CD8-positive, alpha-beta T cell (primary cell): ENCODE measurements at regions of chr2 and their contacts with region 1.

Region 1: GRCh38 chr2:70948337-70949003 is 12.8 kb downstream of the ATP6V1B1 start:
- DNase-seq: peak; percentile 55 to 86 (median 79)
- ATAC-seq: peak; percentile 97
- H3K4me3 ChIP-seq: peak overlapping the region; percentile 3 to 29
- H3K4me3 Mint-ChIP-seq: peak overlapping the region; percentile 77
- H3K27ac ChIP-seq: no peak overlapping the region
- H3K27ac Mint-ChIP-seq: no peak overlapping the region
- H3K4me1 ChIP-seq: no peaks in the 10 kb centered on the region
- H3K4me1 Mint-ChIP-seq: peaks cover 13% of the 10 kb centered on the region
- H3K27me3 ChIP-seq: peaks cover 0 to under 1% of the 10 kb centered on the region in 2 experiments
- H3K27me3 Mint-ChIP-seq: peaks cover 17% of the 10 kb centered on the region
- CTCF ChIP-seq: peak; percentile 75

Region 2: DNA sequence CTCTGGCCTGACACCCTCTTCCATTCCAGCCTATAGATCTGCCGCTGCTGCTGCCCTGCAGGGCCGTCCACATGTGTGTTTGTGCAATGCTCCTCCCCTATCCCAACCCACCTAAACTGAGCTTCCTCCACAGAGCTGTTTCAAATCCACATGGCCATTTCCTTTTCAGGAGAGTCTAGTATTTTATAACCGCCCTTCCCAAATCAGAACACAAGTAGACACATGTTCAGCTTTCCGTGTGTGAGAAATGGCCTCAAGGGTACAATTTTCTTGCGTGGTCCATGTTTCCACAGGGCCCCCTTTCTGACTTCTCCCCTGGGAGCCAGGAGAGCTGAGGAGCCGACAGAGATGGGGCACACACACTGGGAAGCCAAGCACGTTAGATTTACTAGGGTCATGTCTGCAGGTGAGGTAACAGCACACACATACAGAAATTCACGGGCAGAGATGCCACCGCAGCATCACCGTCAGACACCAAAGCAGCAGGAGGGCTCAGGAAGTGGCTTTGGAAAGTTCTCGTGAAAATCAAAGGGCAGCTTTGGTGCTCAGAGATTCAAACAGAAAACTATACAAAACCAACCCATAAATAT is 292.0 kb before region 1 on chr2:
- CTCF ChIA-PET with region 1: interaction called, 7 read pairs
- POLR2A ChIA-PET with region 1: no interaction called
- intact Hi-C with region 1: loop called (anchors 2 kb)
- DNase-seq: peak in 7 of 9 experiments; percentile 11 to 79 (median 57)
- ATAC-seq: peak; percentile 84
- H3K4me3 ChIP-seq: no peak overlapping the region
- H3K4me3 Mint-ChIP-seq: peak overlapping the region; percentile 10
- H3K27ac ChIP-seq: peak overlapping the region in 1 of 2 experiments; percentile 13
- H3K27ac Mint-ChIP-seq: peak overlapping the region; percentile 77
- H3K4me1 ChIP-seq: peaks cover 29% of the 10 kb centered on the region
- H3K4me1 Mint-ChIP-seq: peaks cover 37% of the 10 kb centered on the region
- H3K27me3 ChIP-seq: no peaks in the 10 kb centered on the region
- H3K27me3 Mint-ChIP-seq: peaks cover 13% of the 10 kb centered on the region
- CTCF ChIP-seq: no peak

Region 3: GRCh38 chr2:70861777-70862625 is 86.5 kb before region 1 on chr2:
- CTCF ChIA-PET with region 1: interaction called, 7 read pairs
- POLR2A ChIA-PET with region 1: no interaction called
- intact Hi-C with region 1: loop called (anchors 1 kb)
- DNase-seq: peak; percentile 43 to 80 (median 71)
- ATAC-seq: peak; percentile 87
- H3K4me3 ChIP-seq: no peak overlapping the region
- H3K4me3 Mint-ChIP-seq: no peak overlapping the region
- H3K27ac ChIP-seq: no peak overlapping the region
- H3K27ac Mint-ChIP-seq: no peak overlapping the region
- H3K4me1 ChIP-seq: peaks cover 3% of the 10 kb centered on the region
- H3K4me1 Mint-ChIP-seq: peaks cover 5% of the 10 kb centered on the region
- H3K27me3 ChIP-seq: peaks cover 2 to 4% of the 10 kb centered on the region in 2 experiments
- H3K27me3 Mint-ChIP-seq: peaks cover 33% of the 10 kb centered on the region
- CTCF ChIP-seq: peak; percentile 73

Region 4: DNA sequence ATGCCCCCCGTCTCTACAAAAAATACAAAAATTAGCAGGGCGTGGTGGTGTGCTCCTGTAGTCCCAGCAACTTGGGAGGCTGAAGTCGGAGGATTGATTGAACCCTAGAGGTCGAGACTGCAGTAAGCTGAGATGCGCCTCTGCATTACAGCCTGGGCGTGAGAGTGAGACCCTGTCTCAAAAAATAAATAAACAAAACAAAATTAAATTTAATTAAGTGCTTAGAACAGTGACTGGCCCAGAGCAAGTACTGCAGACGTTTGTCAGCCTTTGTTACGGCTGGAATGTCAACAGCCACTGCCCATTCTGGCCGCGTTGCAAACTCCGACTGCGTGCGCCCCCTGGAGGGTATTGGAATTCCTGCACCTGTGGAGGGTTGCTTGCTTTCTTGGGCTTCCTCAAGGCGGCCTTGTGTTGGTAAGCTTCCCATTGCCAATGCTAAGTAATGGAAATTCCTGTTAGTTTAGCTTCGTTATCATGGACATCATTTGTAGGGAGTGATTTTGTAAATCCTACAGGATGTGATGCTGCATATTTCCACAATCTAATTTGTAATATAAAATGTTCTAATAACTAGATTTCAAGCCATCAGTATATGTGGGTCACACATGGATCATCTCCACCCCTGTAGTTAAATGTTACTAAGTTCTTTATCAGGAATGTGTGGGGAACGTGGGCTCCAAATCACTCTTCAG is 28.7 kb before region 1 on chr2:
- CTCF ChIA-PET with region 1: interaction called, 22 read pairs
- POLR2A ChIA-PET with region 1: no interaction called
- intact Hi-C with region 1: no loop called
- DNase-seq: peak; percentile 39 to 80 (median 71)
- ATAC-seq: peak; percentile 61
- H3K4me3 ChIP-seq: no peak overlapping the region
- H3K4me3 Mint-ChIP-seq: no peak overlapping the region
- H3K27ac ChIP-seq: no peak overlapping the region
- H3K27ac Mint-ChIP-seq: no peak overlapping the region
- H3K4me1 ChIP-seq: no peaks in the 10 kb centered on the region
- H3K4me1 Mint-ChIP-seq: no peaks in the 10 kb centered on the region
- H3K27me3 ChIP-seq: peaks cover 0 to 3% of the 10 kb centered on the region in 2 experiments
- H3K27me3 Mint-ChIP-seq: peaks cover 34% of the 10 kb centered on the region
- CTCF ChIP-seq: peak; percentile 86

Region 5: GRCh38 chr2:70964596-70965386 is 16.3 kb after region 1 on chr2:
- CTCF ChIA-PET with region 1: interaction called, 35 read pairs
- POLR2A ChIA-PET with region 1: no interaction called
- intact Hi-C with region 1: no loop called
- DNase-seq: peak; percentile 67 to 90 (median 83)
- ATAC-seq: peak; percentile 97
- H3K4me3 ChIP-seq: peak overlapping the region; percentile 61 to 80
- H3K4me3 Mint-ChIP-seq: peak overlapping the region; percentile 80
- H3K27ac ChIP-seq: no peak overlapping the region
- H3K27ac Mint-ChIP-seq: no peak overlapping the region
- H3K4me1 ChIP-seq: peaks cover 12% of the 10 kb centered on the region
- H3K4me1 Mint-ChIP-seq: peaks cover 7% of the 10 kb centered on the region
- H3K27me3 ChIP-seq: peaks cover 7 to 9% of the 10 kb centered on the region in 2 experiments
- H3K27me3 Mint-ChIP-seq: peaks cover 26% of the 10 kb centered on the region
- CTCF ChIP-seq: peak; percentile 93

Region 6: GRCh38 chr2:71995067-71995665 is 1046.7 kb after region 1 on chr2:
- CTCF ChIA-PET with region 1: no interaction called
- POLR2A ChIA-PET with region 1: no interaction called
- intact Hi-C with region 1: no loop called
- DNase-seq: no peak
- ATAC-seq: no peak
- H3K4me3 ChIP-seq: no peak overlapping the region
- H3K4me3 Mint-ChIP-seq: no peak overlapping the region
- H3K27ac ChIP-seq: no peak overlapping the region
- H3K27ac Mint-ChIP-seq: no peak overlapping the region
- H3K4me1 ChIP-seq: no peaks in the 10 kb centered on the region
- H3K4me1 Mint-ChIP-seq: no peaks in the 10 kb centered on the region
- H3K27me3 ChIP-seq: no peaks in the 10 kb centered on the region
- H3K27me3 Mint-ChIP-seq: peaks cover 2% of the 10 kb centered on the region
- CTCF ChIP-seq: no peak